ENCODE measurements at regions of chr13 and their contacts with region 1.

Region 1: DNA sequence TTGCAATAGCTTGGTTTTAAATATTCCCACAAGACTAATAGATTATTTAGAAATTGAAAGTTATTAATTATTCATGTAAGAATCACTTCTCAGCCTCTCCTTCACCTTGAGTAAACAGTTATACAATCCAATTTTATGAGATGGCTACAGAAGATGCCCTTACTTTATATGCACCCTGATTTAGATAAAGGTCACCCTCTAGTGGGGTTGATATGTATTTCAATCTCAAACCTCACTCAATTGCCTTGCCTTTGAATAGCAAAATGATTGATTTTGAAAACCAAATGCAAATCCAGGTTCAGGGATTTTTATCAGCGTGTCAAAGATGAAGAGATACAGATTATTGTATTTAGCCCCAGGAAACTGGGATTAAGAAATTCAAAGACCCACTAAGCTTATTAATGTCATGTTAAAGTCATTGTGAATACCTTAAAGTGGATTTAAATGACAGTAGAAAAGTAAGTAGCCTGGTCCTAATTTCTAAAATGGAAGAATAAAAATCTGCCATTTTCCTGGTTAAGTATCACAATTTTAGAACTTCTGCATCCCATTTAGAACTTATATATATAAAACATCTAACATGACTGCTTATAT is 305.1 kb downstream of the ITGBL1 start:
- DNase-seq: peak; percentile 74
- H3K27ac ChIP-seq: no peak overlapping the region
- CTCF ChIP-seq: peak; percentile 67

Region 2: DNA sequence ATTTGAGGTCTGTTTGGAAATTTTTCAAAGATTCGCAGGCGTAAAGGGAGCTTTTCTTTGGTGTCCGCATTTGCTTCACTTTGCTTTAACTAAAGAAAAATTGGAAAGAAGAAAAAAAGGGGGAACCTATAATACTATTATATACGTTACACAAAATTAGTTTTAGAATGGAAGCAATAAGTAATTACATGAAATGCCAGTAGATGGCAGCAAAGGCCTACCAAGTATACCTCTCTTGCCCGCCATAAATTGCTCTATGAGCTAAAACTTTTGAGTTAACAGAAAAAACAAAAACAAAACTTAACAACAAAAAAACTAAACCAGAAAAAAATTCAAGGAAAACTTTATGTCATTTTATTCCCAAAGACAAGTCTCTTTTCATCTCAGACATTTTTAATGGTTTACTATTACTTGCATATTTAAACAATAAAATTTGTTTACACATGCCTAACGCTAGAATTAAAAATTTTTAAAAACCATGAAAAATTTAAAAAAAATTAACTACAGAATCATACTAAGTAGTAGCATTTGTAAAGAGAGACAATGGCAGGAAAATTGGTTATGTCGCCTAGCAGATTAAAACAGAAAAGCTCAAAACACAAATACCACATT is 612.6 kb before region 1 on chr13:
- CTCF ChIA-PET with region 1: interaction called, 22 read pairs
- POLR2A ChIA-PET with region 1: no interaction called
- DNase-seq: peak; percentile 33
- H3K27ac ChIP-seq: no peak overlapping the region
- CTCF ChIP-seq: peak; percentile 73

Region 3: GRCh38 chr13:101514788-101515187 is 242.8 kb before region 1 on chr13:
- CTCF ChIA-PET with region 1: interaction called, 12 read pairs
- POLR2A ChIA-PET with region 1: no interaction called
- DNase-seq: peak; percentile 42
- H3K27ac ChIP-seq: no peak overlapping the region
- CTCF ChIP-seq: peak; percentile 79

Region 4: GRCh38 chr13:101739382-101740178 is 18.0 kb before region 1 on chr13:
- CTCF ChIA-PET with region 1: no interaction called
- POLR2A ChIA-PET with region 1: no interaction called
- DNase-seq: no peak
- H3K27ac ChIP-seq: no peak overlapping the region
- CTCF ChIP-seq: no peak

Region 5: DNA sequence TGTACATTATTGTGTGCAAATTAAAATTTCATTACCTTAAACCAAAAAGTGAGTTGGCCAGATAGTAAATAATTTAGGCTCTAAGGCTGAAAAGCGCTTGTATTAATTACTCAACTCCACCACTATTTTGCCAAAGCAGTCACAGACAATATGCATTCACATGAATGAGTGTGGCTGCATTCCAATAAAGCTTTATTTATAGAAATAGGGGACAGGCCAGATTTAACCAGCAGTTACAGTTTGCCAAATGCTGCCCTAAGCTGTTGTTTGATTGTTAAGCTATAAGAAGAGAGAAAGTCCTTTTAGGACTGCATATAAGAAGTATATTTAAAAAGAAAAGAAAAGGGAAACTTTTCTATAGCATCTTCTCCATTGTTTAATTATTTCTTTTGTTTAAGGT is 37.5 kb after region 1 on chr13:
- CTCF ChIA-PET with region 1: no interaction called
- POLR2A ChIA-PET with region 1: no interaction called
- DNase-seq: no peak
- H3K27ac ChIP-seq: no peak overlapping the region
- CTCF ChIP-seq: no peak

Region 6: DNA sequence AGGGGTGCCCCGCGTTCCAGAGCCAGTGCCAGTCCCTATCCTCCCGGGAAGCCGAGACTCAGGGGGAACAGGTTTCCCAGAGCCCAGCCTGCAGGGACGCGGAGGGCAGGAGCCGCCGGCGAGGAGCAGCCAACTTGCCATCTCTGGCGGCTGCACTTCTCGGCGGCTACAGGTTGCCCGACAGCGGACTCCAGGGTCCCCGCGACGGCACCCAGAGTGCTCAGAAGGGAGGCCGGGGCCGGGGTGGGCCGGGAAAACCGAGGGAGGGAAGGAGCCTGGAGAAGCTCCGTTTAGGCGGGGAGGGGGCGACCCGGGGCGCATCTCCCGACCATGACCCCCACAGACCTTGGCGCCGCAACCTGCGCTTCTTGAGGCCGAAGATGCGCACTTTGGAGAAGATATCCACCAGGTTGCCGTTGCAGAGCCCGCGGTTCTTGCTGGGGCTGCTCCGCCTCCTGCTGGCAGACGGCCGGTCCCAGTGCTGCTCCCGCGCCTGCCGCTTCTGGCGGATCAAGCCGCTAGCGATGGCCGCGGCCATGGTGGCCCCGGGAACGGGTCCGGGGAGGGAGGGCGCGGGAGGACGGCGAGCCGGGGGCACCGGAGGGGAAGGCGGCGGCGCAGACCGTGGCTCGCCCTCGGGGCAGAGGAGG is 158.7 kb after region 1 on chr13:
- CTCF ChIA-PET with region 1: no interaction called
- POLR2A ChIA-PET with region 1: no interaction called
- DNase-seq: no peak
- H3K27ac ChIP-seq: no peak overlapping the region
- CTCF ChIP-seq: no peak

Measured in RWPE1 (cell line).